Activated naive CD8-positive, alpha-beta T cell treated with anti-CD3 and anti-CD28 coated beads, Interleukin-2, amount 10 ng/mL, durations not matched to agents 7 days and 5 days (primary cell): ENCODE measurements at regions of chr22 and their contacts with region 1.

Region 1: DNA sequence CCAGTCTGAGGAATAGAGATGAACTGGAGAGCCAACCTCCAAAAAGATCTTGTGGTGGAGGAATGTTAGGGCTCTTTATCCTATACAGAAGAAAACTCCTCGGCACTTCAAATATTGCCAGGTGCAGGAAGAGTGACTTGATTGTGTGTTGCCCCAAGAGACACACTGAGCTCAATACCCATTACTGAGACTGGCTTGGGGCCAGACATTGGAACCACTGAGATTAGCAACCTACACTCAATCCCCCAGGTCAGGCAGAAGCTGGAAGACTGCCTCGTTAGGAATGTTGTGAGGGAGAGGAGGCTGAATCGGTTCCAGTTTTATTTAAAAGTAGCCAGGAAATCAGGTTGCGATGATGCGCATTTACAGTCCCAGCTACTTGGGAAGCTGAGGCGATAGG is 2.4 kb upstream of the SGSM3 start:
- DNase-seq: no peak
- ATAC-seq: no peak
- H3K4me3 Mint-ChIP-seq: no peak overlapping the region
- H3K27ac Mint-ChIP-seq: no peak overlapping the region
- H3K4me1 Mint-ChIP-seq: peaks cover 14% of the 10 kb centered on the region
- H3K27me3 Mint-ChIP-seq: no peaks in the 10 kb centered on the region

Region 2: GRCh38 chr22:39785232-39785631 is 582.8 kb before region 1 on chr22:
- POLR2A ChIA-PET with region 1: interaction called, 11 read pairs
- DNase-seq: no peak
- ATAC-seq: no peak
- H3K4me3 Mint-ChIP-seq: no peak overlapping the region
- H3K27ac Mint-ChIP-seq: no peak overlapping the region
- H3K4me1 Mint-ChIP-seq: peaks cover 5% of the 10 kb centered on the region
- H3K27me3 Mint-ChIP-seq: peaks cover 3% of the 10 kb centered on the region